Right lobe of liver (tissue), 6 donors: ENCODE measurements at regions of chr17 and their contacts with region 1.

Region 1: GRCh38 chr17:59372138-59372857 is 40.8 kb downstream of the YPEL2 start:
- DNase-seq: no peak
- ATAC-seq: peak; percentile 51 to 63 (median 54)
- H3K4me3 ChIP-seq: no peak overlapping the region
- H3K27ac ChIP-seq: peak overlapping the region; percentile 65 to 78 (median 70)
- H3K4me1 ChIP-seq: peaks cover 0 to 69% (median 38%) of the 10 kb centered on the region in 4 donors
- H3K27me3 ChIP-seq: no peaks in the 10 kb centered on the region
- CTCF ChIP-seq: no peak
- POLR2A ChIP-seq: peak; percentile 37

Region 2: GRCh38 chr17:59427425-59427921 is 55.2 kb after region 1 on chr17:
- intact Hi-C with region 1: loop called (anchors 10 kb)
- DNase-seq: no peak
- ATAC-seq: peak in 3 of 4 donors; percentile 17 to 41 (median 31)
- H3K4me3 ChIP-seq: no peak overlapping the region
- H3K27ac ChIP-seq: peak overlapping the region; percentile 73 to 88 (median 81)
- H3K4me1 ChIP-seq: peaks cover 0 to 88% (median 50%) of the 10 kb centered on the region in 4 donors
- H3K27me3 ChIP-seq: no peaks in the 10 kb centered on the region
- CTCF ChIP-seq: peak in 1 of 4 donors; percentile 17
- POLR2A ChIP-seq: no peak

Region 3: GRCh38 chr17:59707114-59707970 is 335.0 kb after region 1 on chr17 and contains the starts of genes PTRH2 and VMP1:
- intact Hi-C with region 1: no loop called
- DNase-seq: peak; percentile 98 to 99 (median 99)
- ATAC-seq: peak; percentile 97 to 99 (median 98)
- H3K4me3 ChIP-seq: peak within 1 kb of the TSS; percentile 52 to 88 (median 75)
- H3K27ac ChIP-seq: peak within 1 kb of the TSS; percentile 77 to 91 (median 83)
- H3K4me1 ChIP-seq: peaks cover 0 to 26% (median 12%) of the 10 kb centered on the region in 4 donors
- H3K27me3 ChIP-seq: no peaks in the 10 kb centered on the region
- CTCF ChIP-seq: no peak
- POLR2A ChIP-seq: peak; percentile 90
- total RNA-seq, gene PTRH2: 13.1 to 50.8 (median 19.7) TPM
- total RNA-seq, gene VMP1: 56.9 to 247 (median 160) TPM